ENCODE measurements at regions of chr22 and their contacts with region 1.

Region 1: GRCh38 chr22:38353142-38353629 is 36.0 kb upstream of the CSNK1E start:
- DNase-seq: peak; percentile 64
- H3K4me3 ChIP-seq: no peak overlapping the region
- H3K27ac ChIP-seq: no peak overlapping the region
- H3K4me1 ChIP-seq: no peaks in the 10 kb centered on the region
- H3K27me3 ChIP-seq: no peaks in the 10 kb centered on the region
- CTCF ChIP-seq: peak; percentile 95

Region 2: GRCh38 chr22:38051900-38052862 is 301.0 kb before region 1 on chr22:
- CTCF ChIA-PET with region 1: interaction called, 4 read pairs
- POLR2A ChIA-PET with region 1: no interaction called
- intact Hi-C with region 1: loop called (anchors 2 kb)
- DNase-seq: peak; percentile 85
- H3K4me3 ChIP-seq: no peak overlapping the region
- H3K27ac ChIP-seq: no peak overlapping the region
- H3K4me1 ChIP-seq: no peaks in the 10 kb centered on the region
- H3K27me3 ChIP-seq: no peaks in the 10 kb centered on the region
- CTCF ChIP-seq: peak; percentile 96

Region 3: GRCh38 chr22:38114484-38115398 is 238.4 kb before region 1 on chr22:
- CTCF ChIA-PET with region 1: no interaction called
- POLR2A ChIA-PET with region 1: no interaction called
- intact Hi-C with region 1: loop called (anchors 1 kb)
- DNase-seq: peak; percentile 83
- H3K4me3 ChIP-seq: no peak overlapping the region
- H3K27ac ChIP-seq: no peak overlapping the region
- H3K4me1 ChIP-seq: no peaks in the 10 kb centered on the region
- H3K27me3 ChIP-seq: no peaks in the 10 kb centered on the region
- CTCF ChIP-seq: peak; percentile 97

Region 4: GRCh38 chr22:38298312-38299000 is 54.7 kb before region 1 on chr22:
- CTCF ChIA-PET with region 1: no interaction called
- POLR2A ChIA-PET with region 1: no interaction called
- intact Hi-C with region 1: loop called (anchors 5 kb)
- DNase-seq: no peak
- H3K4me3 ChIP-seq: no peak overlapping the region
- H3K27ac ChIP-seq: no peak overlapping the region
- H3K4me1 ChIP-seq: no peaks in the 10 kb centered on the region
- H3K27me3 ChIP-seq: no peaks in the 10 kb centered on the region
- CTCF ChIP-seq: peak; percentile 66

Region 5: GRCh38 chr22:38569972-38570778 is 217.0 kb after region 1 on chr22 and contains the start of gene DMC1:
- CTCF ChIA-PET with region 1: interaction called, 3 read pairs
- POLR2A ChIA-PET with region 1: no interaction called
- intact Hi-C with region 1: loop called (anchors 10 kb)
- DNase-seq: peak; percentile 95
- H3K4me3 ChIP-seq: peak within 1 kb of the TSS; percentile 49
- H3K27ac ChIP-seq: peak within 1 kb of the TSS; percentile 66
- H3K4me1 ChIP-seq: peaks cover 11% of the 10 kb centered on the region
- H3K27me3 ChIP-seq: no peaks in the 10 kb centered on the region
- CTCF ChIP-seq: no peak
- total RNA-seq, gene DMC1: 1.7 and 2.3 TPM in 2 replicates